Activated CD4-positive, alpha-beta T cell treated with anti-CD3 and anti-CD28 coated beads, Interleukin-2, amount 10 ng/mL, durations not matched to agents 24 days and 14 days (primary cell): ENCODE measurements at regions of chr4 and their contacts with region 1.

Region 1: DNA sequence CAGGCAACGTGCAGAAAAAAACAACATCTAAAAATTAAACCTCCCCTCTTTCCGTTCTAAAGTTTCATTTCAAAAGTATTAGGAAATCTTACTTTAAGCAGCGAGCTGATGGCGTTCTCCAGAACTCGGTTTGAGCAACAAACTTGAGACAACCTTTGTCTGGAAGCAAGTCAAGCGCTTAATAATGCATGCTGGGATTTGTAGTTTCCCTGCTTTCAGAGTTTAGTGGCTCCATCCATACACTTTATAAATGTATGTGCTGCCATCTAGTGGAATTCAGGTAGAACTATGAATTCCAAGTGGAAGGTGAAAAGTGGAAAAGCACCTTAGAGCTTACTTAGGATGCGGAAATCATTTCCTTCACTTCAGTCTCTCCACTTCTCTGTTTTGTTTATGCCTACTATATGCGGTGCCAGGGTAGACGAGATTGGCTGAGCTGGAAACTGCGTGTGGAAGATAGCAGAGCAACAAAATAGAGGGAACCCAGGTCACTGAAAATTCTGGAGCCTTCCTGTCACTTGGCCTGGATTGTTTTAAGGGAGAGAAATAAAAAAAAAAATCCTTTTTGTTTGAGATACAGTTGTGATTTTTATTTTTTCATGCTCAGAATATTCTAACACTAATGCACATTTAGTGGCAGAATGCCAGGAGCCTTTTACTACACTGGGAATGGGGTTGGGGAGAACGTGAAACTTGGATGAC is at the start of gene BDH2:
- DNase-seq: peak; percentile 87
- H3K4me3 Mint-ChIP-seq: peak within 1 kb of the TSS; percentile 84
- H3K27ac Mint-ChIP-seq: peak within 1 kb of the TSS; percentile 83
- H3K4me1 Mint-ChIP-seq: peaks cover 8% of the 10 kb centered on the region
- H3K27me3 Mint-ChIP-seq: no peaks in the 10 kb centered on the region
- total RNA-seq, gene BDH2: 11.0 and 13.2 TPM in 2 replicates

Region 2: DNA sequence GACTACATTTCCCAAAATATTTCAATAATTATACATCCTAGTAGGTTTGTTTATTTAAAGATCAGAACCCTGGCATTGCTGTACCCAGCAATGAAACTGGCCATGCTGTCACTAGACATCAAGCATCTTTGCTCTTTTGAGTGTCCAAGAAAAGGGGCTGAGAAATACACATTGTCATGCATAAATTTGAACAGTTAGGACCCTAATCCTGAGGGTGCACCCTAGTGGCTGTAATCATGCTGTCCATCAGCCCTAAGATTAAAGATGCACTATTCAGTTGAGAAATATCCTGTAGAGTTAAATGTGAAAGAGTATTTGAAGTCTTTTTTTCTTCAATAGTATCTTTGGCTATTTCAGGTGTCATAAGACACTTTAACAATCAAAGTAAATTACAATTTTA is 489.8 kb before region 1 on chr4:
- intact Hi-C with region 1: loop called (anchors 5 kb)
- DNase-seq: no peak
- H3K4me3 Mint-ChIP-seq: no peak overlapping the region
- H3K27ac Mint-ChIP-seq: peak overlapping the region; percentile 73
- H3K4me1 Mint-ChIP-seq: peaks cover 73% of the 10 kb centered on the region
- H3K27me3 Mint-ChIP-seq: no peaks in the 10 kb centered on the region

Region 3: GRCh38 chr4:102627831-102628523 is 471.9 kb before region 1 on chr4:
- intact Hi-C with region 1: loop called (anchors 1 kb)
- DNase-seq: no peak
- H3K4me3 Mint-ChIP-seq: no peak overlapping the region
- H3K27ac Mint-ChIP-seq: peak overlapping the region; percentile 79
- H3K4me1 Mint-ChIP-seq: peaks cover 51% of the 10 kb centered on the region
- H3K27me3 Mint-ChIP-seq: no peaks in the 10 kb centered on the region

Region 4: GRCh38 chr4:102868781-102869568 is 230.9 kb before region 1 on chr4 and contains the start of gene CISD2:
- intact Hi-C with region 1: loop called (anchors 5 kb)
- DNase-seq: peak; percentile 98
- H3K4me3 Mint-ChIP-seq: peak within 1 kb of the TSS; percentile 93
- H3K27ac Mint-ChIP-seq: peak within 1 kb of the TSS; percentile 99
- H3K4me1 Mint-ChIP-seq: peaks cover 56% of the 10 kb centered on the region
- H3K27me3 Mint-ChIP-seq: no peaks in the 10 kb centered on the region
- total RNA-seq, gene CISD2: 43.9 and 48.5 TPM in 2 replicates

Region 5: GRCh38 chr4:103019308-103020124 is 80.3 kb before region 1 on chr4 and contains the start of gene SLC9B1:
- intact Hi-C with region 1: loop called (anchors 1 kb)
- DNase-seq: peak; percentile 98
- H3K4me3 Mint-ChIP-seq: peak within 1 kb of the TSS; percentile 93
- H3K27ac Mint-ChIP-seq: peak within 1 kb of the TSS; percentile 94
- H3K4me1 Mint-ChIP-seq: peaks cover 22% of the 10 kb centered on the region
- H3K27me3 Mint-ChIP-seq: no peaks in the 10 kb centered on the region
- total RNA-seq, gene SLC9B1: 0.23 and 0.47 TPM in 2 replicates

Region 6: GRCh38 chr4:103046416-103047290 is 53.2 kb before region 1 on chr4:
- intact Hi-C with region 1: loop called (anchors 2 kb)
- DNase-seq: peak; percentile 79
- H3K4me3 Mint-ChIP-seq: no peak overlapping the region
- H3K27ac Mint-ChIP-seq: no peak overlapping the region
- H3K4me1 Mint-ChIP-seq: peaks cover 14% of the 10 kb centered on the region
- H3K27me3 Mint-ChIP-seq: no peaks in the 10 kb centered on the region

Region 7: GRCh38 chr4:103075901-103076739 is 23.7 kb before region 1 on chr4:
- intact Hi-C with region 1: loop called (anchors 1 kb)
- DNase-seq: peak; percentile 90
- H3K4me3 Mint-ChIP-seq: peak overlapping the region; percentile 88
- H3K27ac Mint-ChIP-seq: peak overlapping the region; percentile 96
- H3K4me1 Mint-ChIP-seq: peaks cover 37% of the 10 kb centered on the region
- H3K27me3 Mint-ChIP-seq: no peaks in the 10 kb centered on the region